Dorsolateral prefrontal cortex (tissue), 120 donors: ENCODE measurements at regions of chr16 and their contacts with region 1.

Region 1: GRCh38 chr16:76483307-76483909 is 206.2 kb downstream of the CNTNAP4 start:
- DNase-seq: peak in 1 of 10 donors; percentile 23
- H3K4me3 ChIP-seq: peak overlapping the region in 44 of 59 donors; percentile 1 to 57 (median 33)
- H3K27ac ChIP-seq: peak overlapping the region in 58 of 59 donors; percentile 3 to 93 (median 82)
- H3K27me3 ChIP-seq: no peaks in the 10 kb centered on the region
- CTCF ChIP-seq: peak in 11 of 56 donors; percentile 1 to 25 (median 11)

Region 2: GRCh38 chr16:76287466-76287865 is 195.9 kb before region 1 on chr16:
- intact Hi-C with region 1: loop called in 1 of 2 experiments (anchors 10 kb)
- DNase-seq: peak in 1 of 10 donors; percentile 60
- H3K4me3 ChIP-seq: peak overlapping the region in 8 of 59 donors; percentile 1 to 35 (median 7)
- H3K27ac ChIP-seq: peak overlapping the region in 17 of 59 donors; percentile 1 to 65 (median 30)
- H3K27me3 ChIP-seq: no peaks in the 10 kb centered on the region
- CTCF ChIP-seq: no peak